ENCODE measurements at regions of chr1 and their contacts with region 1.

Region 1: GRCh38 chr1:13813398-13814012 is 113.5 kb downstream of the PRDM2 start:
- DNase-seq: peak; percentile 83
- ATAC-seq: peak; percentile 70
- H3K4me3 Mint-ChIP-seq: no peak overlapping the region
- H3K27ac Mint-ChIP-seq: no peak overlapping the region
- H3K4me1 Mint-ChIP-seq: peaks cover 10% of the 10 kb centered on the region
- H3K27me3 Mint-ChIP-seq: no peaks in the 10 kb centered on the region

Region 2: DNA sequence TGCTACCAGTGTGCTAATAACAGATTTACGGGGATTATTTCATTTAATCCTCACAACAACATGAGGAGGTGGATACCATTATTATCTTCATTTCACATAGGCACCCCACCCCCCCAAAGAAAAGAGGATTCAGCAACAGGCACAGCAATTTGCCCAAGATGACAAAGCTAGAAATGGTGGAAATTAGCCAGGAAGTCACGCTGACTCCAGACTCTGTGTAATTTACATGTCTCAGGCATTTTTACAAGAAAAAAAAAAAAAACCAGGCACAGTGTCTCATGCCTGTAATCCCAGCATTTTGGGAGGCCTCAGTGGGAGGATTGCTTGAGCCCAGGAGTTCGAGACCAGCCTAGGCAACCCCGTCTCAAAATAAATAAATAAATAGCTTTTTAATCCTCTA is 151.0 kb before region 1 on chr1:
- CTCF ChIA-PET with region 1: interaction called, 8 read pairs
- POLR2A ChIA-PET with region 1: no interaction called
- intact Hi-C with region 1: loop called (anchors 1 kb)
- DNase-seq: no peak
- ATAC-seq: no peak
- H3K4me3 Mint-ChIP-seq: no peak overlapping the region
- H3K27ac Mint-ChIP-seq: no peak overlapping the region
- H3K4me1 Mint-ChIP-seq: peaks cover 4% of the 10 kb centered on the region
- H3K27me3 Mint-ChIP-seq: peaks cover 5% of the 10 kb centered on the region

Region 3: DNA sequence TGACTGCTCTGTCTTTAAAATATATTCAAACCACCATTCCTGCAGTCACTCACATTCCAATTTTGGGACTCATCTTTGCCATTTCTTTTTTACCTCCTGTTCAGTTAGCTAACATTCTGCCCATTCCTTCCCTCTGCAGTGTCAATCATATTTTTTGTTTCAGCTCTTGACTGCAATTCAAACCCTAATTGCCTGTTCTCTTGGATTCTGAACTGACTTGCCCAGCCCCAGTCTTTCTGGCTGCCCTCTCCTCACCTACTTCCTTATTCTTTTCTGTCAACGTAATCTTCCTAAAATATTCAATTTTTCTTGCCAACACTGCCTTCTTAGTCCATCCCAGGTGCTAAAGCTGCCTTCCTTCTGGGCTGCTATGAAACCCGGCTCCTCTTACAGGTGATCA is 107.5 kb before region 1 on chr1:
- CTCF ChIA-PET with region 1: no interaction called
- POLR2A ChIA-PET with region 1: no interaction called
- intact Hi-C with region 1: no loop called
- DNase-seq: no peak
- ATAC-seq: no peak
- H3K4me3 Mint-ChIP-seq: no peak overlapping the region
- H3K27ac Mint-ChIP-seq: peak overlapping the region; percentile 32
- H3K4me1 Mint-ChIP-seq: peaks cover 70% of the 10 kb centered on the region
- H3K27me3 Mint-ChIP-seq: no peaks in the 10 kb centered on the region

Region 4: GRCh38 chr1:13976485-13976884 is 163.0 kb after region 1 on chr1:
- CTCF ChIA-PET with region 1: no interaction called
- POLR2A ChIA-PET with region 1: no interaction called
- intact Hi-C with region 1: no loop called
- DNase-seq: no peak
- ATAC-seq: no peak
- H3K4me3 Mint-ChIP-seq: no peak overlapping the region
- H3K27ac Mint-ChIP-seq: no peak overlapping the region
- H3K4me1 Mint-ChIP-seq: no peaks in the 10 kb centered on the region
- H3K27me3 Mint-ChIP-seq: peaks cover 14% of the 10 kb centered on the region

Measured in activated CD4-positive, alpha-beta T cell treated with anti-CD3 and anti-CD28 coated beads for 36 hours (primary cell).